ENCODE measurements at regions of chr6 and their contacts with region 1.

Region 1: DNA sequence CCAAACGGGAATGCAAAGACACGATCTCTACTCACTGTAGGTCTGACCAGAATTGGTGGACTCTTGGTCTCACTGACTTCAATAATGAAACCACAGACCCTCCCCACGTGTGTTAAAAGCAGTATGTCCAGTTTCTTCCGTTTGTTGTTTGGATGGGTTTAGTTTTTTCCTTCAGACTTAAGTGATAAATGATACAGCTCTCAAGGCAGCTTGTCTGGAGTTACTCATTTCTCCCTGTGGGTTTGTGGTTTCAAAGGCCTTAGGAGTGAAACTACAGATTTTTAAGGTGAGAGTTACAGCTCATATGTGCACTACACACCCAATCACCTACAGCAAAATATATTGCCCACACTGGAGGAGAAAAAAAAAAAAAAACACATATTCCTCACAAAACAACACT is 86.7 kb upstream of the STMND1 start:
- DNase-seq: peak; percentile 56
- H3K4me3 Mint-ChIP-seq: peak overlapping the region; percentile 41
- H3K27ac Mint-ChIP-seq: no peak overlapping the region
- H3K4me1 Mint-ChIP-seq: peaks cover 18% of the 10 kb centered on the region
- H3K27me3 Mint-ChIP-seq: peaks cover 27% of the 10 kb centered on the region

Region 2: DNA sequence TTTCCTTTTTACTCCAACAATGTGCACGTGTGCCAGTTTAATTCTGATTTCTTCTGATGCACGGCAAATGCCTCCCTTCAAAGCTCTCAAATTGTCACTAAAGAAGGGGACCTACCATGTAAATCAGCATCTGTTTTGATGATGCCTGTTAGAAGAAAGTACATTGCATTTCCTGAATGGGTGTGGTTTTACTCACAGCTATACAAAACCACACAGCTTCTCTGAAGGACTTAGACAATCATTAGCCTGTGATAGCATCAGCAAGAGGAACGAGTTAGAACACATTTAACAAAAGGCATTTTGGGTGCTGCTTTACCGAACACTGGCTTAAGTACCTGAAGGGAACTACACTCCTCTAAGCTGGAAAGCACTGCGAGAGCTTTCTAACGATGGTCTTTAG is 363.3 kb before region 1 on chr6:
- CTCF ChIA-PET with region 1: no interaction called
- intact Hi-C with region 1: loop called (anchors 10 kb)
- DNase-seq: peak; percentile 29
- H3K4me3 Mint-ChIP-seq: no peak overlapping the region
- H3K27ac Mint-ChIP-seq: no peak overlapping the region
- H3K4me1 Mint-ChIP-seq: peaks cover 24% of the 10 kb centered on the region
- H3K27me3 Mint-ChIP-seq: no peaks in the 10 kb centered on the region

Region 3: DNA sequence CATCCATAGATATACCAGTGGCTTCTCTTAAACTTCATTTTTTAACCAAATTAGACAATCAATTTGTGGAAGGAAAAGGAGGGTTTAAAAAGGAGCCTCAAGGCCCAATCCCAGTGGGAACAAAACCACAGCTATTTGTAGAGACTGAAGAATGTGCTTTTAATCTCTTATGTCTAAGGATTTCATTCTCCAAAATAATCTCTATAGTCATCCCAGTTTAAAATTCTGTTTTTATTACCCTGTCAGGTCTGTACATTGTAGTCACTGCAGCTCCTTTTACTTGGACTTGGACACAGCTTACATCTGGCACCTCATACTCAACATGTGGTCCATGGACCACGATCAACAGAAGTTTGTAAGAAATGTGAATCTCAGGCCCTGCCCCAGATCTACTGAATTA is 65.4 kb before region 1 on chr6:
- CTCF ChIA-PET with region 1: interaction called, 3 read pairs
- intact Hi-C with region 1: loop called (anchors 2 kb)
- DNase-seq: no peak
- H3K4me3 Mint-ChIP-seq: no peak overlapping the region
- H3K27ac Mint-ChIP-seq: no peak overlapping the region
- H3K4me1 Mint-ChIP-seq: peaks cover 16% of the 10 kb centered on the region
- H3K27me3 Mint-ChIP-seq: peaks cover 54% of the 10 kb centered on the region

Region 4: DNA sequence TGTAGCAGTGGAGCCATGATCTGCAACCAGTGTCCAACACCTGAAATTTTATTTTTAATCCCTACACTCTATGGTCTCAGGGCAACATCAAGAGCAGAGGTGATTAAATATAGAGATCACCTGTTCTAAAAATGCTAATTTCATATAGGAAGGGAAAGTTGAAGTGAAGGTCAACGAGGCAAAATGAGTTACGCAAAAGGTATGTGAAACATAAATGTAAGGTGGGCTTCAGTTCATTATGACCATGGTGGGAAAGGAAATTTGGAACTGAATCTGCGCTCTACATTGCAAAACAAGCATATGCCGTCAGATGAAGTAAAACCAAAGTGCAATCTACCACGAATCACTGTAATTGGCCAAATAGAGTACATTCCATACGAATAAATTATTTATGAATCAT is 51.5 kb after region 1 on chr6:
- CTCF ChIA-PET with region 1: no interaction called
- intact Hi-C with region 1: no loop called
- DNase-seq: no peak
- H3K4me3 Mint-ChIP-seq: no peak overlapping the region
- H3K27ac Mint-ChIP-seq: no peak overlapping the region
- H3K4me1 Mint-ChIP-seq: no peaks in the 10 kb centered on the region
- H3K27me3 Mint-ChIP-seq: peaks cover 10% of the 10 kb centered on the region

Region 5: GRCh38 chr6:17536586-17536985 is 521.4 kb after region 1 on chr6:
- CTCF ChIA-PET with region 1: no interaction called
- intact Hi-C with region 1: loop called (anchors 2 kb)
- DNase-seq: peak; percentile 68
- H3K4me3 Mint-ChIP-seq: no peak overlapping the region
- H3K27ac Mint-ChIP-seq: no peak overlapping the region
- H3K4me1 Mint-ChIP-seq: peaks cover 5% of the 10 kb centered on the region
- H3K27me3 Mint-ChIP-seq: peaks cover 21% of the 10 kb centered on the region